H1 (cell line): ENCODE measurements at regions of chr12 and their contacts with region 1.

Region 1: GRCh38 chr12:115895247-115895646 is 382.2 kb downstream of the MED13L start:
- DNase-seq: peak in 1 of 2 experiments; percentile 61
- H3K4me3 ChIP-seq: no peak overlapping the region
- H3K27ac ChIP-seq: no peak overlapping the region
- H3K4me1 ChIP-seq: peaks cover 0 to 4% (median 2%) of the 10 kb centered on the region in 4 experiments; a peak in 2 of 7 replicates
- H3K27me3 ChIP-seq: no peaks in the 10 kb centered on the region
- CTCF ChIP-seq: peak; percentile 54 to 79 (median 71)
- EP300 ChIP-seq: no peak
- POLR2A ChIP-seq: no peak
- RAD21 ChIP-seq: peak; percentile 45 to 55

Region 2: DNA sequence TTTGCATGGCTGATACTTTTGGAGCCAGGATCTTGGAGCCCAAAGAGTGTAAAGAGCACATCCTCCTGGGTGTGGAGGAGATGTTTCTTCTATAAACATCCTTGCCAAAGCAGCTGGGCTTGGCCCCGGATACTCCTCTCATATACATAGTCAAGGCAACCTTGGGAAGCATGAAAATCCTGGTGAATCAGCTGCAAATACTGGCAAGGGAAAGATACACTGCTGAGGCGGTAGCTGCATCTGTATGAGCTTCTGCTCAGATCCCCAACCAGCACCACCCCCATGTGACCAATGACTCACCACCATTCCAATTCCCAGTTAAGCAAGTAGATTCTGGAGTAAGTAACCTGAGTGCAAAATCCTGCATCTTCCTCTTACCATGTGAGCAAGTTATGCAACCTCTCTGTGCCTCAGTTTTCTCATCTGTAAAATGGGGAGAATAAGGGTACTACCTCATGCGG is 185.1 kb before region 1 on chr12:
- CTCF ChIA-PET with region 1: no interaction called
- POLR2A ChIA-PET with region 1: no interaction called
- DNase-seq: no peak
- H3K4me3 ChIP-seq: no peak overlapping the region
- H3K27ac ChIP-seq: no peak overlapping the region
- H3K4me1 ChIP-seq: no peaks in the 10 kb centered on the region
- H3K27me3 ChIP-seq: no peaks in the 10 kb centered on the region
- CTCF ChIP-seq: no peak
- EP300 ChIP-seq: no peak
- POLR2A ChIP-seq: no peak
- RAD21 ChIP-seq: no peak

Region 3: GRCh38 chr12:115857160-115857922 is 37.9 kb before region 1 on chr12:
- CTCF ChIA-PET with region 1: interaction called, 10 read pairs
- POLR2A ChIA-PET with region 1: no interaction called
- DNase-seq: no peak
- H3K4me3 ChIP-seq: no peak overlapping the region
- H3K27ac ChIP-seq: no peak overlapping the region
- H3K4me1 ChIP-seq: no peaks in the 10 kb centered on the region
- H3K27me3 ChIP-seq: no peaks in the 10 kb centered on the region
- CTCF ChIP-seq: peak; percentile 35 to 54 (median 48)
- EP300 ChIP-seq: no peak
- POLR2A ChIP-seq: no peak
- RAD21 ChIP-seq: peak in 1 of 2 experiments; percentile 40; a peak in 2 of 4 replicates

Region 4: DNA sequence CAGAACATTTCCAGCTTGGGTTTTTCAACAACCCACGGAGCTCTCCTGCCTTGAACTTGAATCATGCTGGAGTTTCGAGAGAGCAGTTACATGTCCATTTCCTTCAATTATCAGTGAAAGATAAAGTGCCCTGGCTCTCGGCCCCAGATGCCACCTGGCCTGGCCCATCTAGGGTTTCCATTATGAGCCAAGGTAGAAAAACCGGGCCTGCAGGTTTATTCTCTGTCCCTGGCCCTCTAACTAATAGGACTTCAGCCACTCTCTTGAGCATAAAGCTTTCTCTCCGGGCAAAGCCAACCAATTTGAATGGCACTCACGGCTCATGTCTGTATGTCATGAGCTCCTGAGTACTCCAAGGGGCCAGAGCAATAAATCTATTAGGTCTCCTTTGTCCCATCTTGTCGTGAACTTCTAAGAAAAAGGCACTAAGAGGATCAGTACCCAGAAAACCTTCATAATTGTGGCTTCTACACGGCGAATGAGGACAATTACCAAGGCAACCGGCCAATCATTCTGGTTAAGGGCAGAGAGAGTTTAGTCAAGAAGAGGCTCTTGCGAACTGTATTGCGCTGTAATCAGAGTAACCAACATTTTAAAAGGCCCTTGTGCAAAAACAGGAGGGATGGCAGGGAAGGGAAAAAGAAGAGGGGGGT is 10.1 kb before region 1 on chr12:
- CTCF ChIA-PET with region 1: interaction called, 27 read pairs
- POLR2A ChIA-PET with region 1: no interaction called
- DNase-seq: no peak
- H3K4me3 ChIP-seq: no peak overlapping the region
- H3K27ac ChIP-seq: no peak overlapping the region
- H3K4me1 ChIP-seq: no peaks in the 10 kb centered on the region
- H3K27me3 ChIP-seq: no peaks in the 10 kb centered on the region
- CTCF ChIP-seq: no peak
- EP300 ChIP-seq: no peak
- POLR2A ChIP-seq: no peak
- RAD21 ChIP-seq: no peak

Region 5: DNA sequence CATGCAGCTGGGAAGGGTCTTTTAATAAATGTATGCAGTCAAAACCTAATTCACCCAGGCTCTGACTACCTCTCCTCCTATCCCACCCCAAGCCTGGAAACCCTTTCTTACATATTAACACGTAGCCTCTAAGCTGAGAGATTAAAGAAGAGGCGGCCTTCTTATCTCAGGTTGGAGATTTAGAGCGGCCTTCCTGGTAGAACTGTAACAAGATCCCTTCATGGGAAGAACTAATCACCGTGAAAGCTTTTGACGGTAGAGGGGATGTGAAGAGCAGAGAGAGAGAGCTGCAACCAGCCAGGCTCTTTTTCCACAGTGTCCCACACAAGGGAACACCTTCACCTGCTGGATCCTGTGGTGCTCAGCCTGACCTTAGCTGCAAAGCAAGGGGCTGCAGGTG is 14.8 kb after region 1 on chr12:
- CTCF ChIA-PET with region 1: interaction called, 14 read pairs
- POLR2A ChIA-PET with region 1: interaction called, 3 read pairs
- DNase-seq: no peak
- H3K4me3 ChIP-seq: no peak overlapping the region
- H3K27ac ChIP-seq: no peak overlapping the region
- H3K4me1 ChIP-seq: no peaks in the 10 kb centered on the region
- H3K27me3 ChIP-seq: no peaks in the 10 kb centered on the region
- CTCF ChIP-seq: no peak
- EP300 ChIP-seq: no peak
- POLR2A ChIP-seq: no peak
- RAD21 ChIP-seq: no peak

Region 6: DNA sequence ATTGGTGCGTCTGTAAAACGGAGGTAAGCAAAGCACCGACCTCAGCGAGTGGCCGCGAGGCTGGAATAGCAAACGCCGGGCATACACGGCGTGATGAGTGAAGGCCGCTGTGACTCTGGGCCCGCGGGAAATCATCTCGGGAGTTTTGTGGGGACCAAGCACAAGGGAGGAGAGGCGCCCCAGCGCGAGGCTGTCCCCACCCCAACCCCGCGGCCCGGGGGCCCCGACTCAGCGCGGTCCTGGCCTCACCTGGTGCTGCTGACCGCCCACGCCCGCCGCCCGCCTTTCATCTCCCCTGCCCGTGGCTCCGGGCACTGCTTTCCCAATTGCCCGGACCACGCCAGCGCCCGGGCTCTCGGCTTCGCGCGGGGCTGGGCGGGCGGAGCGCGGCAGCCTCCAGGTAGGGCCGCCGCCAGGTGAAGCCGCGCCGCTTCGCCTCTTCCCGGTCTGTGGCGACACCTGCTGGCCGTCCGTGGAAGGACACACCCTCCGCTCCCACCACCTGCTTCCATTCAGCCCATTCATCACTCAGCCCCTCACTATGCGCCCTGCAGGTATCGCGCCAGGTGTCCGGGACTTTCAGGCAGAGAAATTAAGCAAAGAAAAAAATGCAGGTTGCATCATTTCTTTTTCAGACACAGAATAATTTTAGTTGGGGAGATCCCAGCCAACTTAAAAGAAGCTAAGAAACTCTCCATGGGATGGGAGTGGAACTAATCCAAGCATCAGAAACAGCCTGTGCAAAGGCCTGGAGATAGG is 21.8 kb after region 1 on chr12:
- CTCF ChIA-PET with region 1: interaction called, 19 read pairs
- POLR2A ChIA-PET with region 1: interaction called, 3 read pairs
- DNase-seq: peak; percentile 62 to 99
- H3K4me3 ChIP-seq: peak overlapping the region; percentile 4 to 64 (median 38); a peak in 7 of 8 replicates
- H3K27ac ChIP-seq: no peak overlapping the region
- H3K4me1 ChIP-seq: peaks cover 0 to 3% (median under 1%) of the 10 kb centered on the region in 4 experiments; a peak in 2 of 7 replicates
- H3K27me3 ChIP-seq: peaks cover 0 to 7% (median 4%) of the 10 kb centered on the region in 4 experiments; a peak in 3 of 7 replicates
- CTCF ChIP-seq: peak; percentile 88 to 99 (median 96)
- EP300 ChIP-seq: no peak; a peak in 1 of 3 replicates
- POLR2A ChIP-seq: no peak
- RAD21 ChIP-seq: peak; percentile 99